ENCODE measurements at regions of chr11 and their contacts with region 1.

Region 1: GRCh38 chr11:9265211-9266131 is at the start of gene DENND5A:
- DNase-seq: peak; percentile 90
- H3K4me3 ChIP-seq: peak within 1 kb of the TSS; percentile 71 to 83 (median 81)
- H3K27ac ChIP-seq: peak within 1 kb of the TSS; percentile 81
- H3K4me1 ChIP-seq: peaks cover 13% of the 10 kb centered on the region
- H3K27me3 ChIP-seq: no peaks in the 10 kb centered on the region
- CTCF ChIP-seq: no peak
- POLR2A ChIP-seq: peak; percentile 88
- total RNA-seq, gene DENND5A: 116 and 117 TPM in 2 replicates

Region 2: GRCh38 chr11:8911029-8911826 is 354.2 kb before region 1 on chr11 and contains the start of gene AKIP1:
- CTCF ChIA-PET with region 1: no interaction called
- POLR2A ChIA-PET with region 1: no interaction called
- dilution Hi-C with region 1: no loop called
- intact Hi-C with region 1: loop called (anchors 10 kb)
- DNase-seq: peak; percentile 98
- H3K4me3 ChIP-seq: peak within 1 kb of the TSS; percentile 63 to 95 (median 82)
- H3K27ac ChIP-seq: peak within 1 kb of the TSS; percentile 63
- H3K4me1 ChIP-seq: peaks cover 32% of the 10 kb centered on the region
- H3K27me3 ChIP-seq: no peaks in the 10 kb centered on the region
- CTCF ChIP-seq: no peak
- POLR2A ChIP-seq: peak; percentile 42
- total RNA-seq, gene AKIP1: 21.9 and 23.4 TPM in 2 replicates

Region 3: DNA sequence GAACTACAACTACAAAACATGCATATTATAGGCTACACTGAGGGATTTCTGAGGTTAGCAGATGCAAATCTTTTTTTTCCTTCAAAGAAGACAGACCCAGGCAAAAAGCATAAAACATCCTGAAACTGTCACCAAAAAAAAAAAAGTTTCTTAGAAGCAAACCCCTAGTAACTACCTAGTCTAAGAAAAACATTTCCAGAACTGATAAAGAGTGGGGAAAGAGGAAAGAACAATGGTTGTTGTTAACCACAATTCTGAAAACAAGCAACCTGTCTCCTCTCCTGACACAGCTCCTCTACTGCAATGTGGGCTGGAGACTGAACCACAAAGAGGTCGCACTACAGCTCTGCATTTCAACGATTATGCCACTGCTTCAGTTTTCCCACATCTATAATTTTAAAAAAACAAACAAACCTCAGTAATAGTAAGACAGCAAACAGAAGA is 15.3 kb before region 1 on chr11:
- CTCF ChIA-PET with region 1: interaction called, 10 read pairs
- POLR2A ChIA-PET with region 1: interaction called, 5 read pairs
- dilution Hi-C with region 1: no loop called
- intact Hi-C with region 1: loop called (anchors 1 kb)
- DNase-seq: peak; percentile 68
- H3K4me3 ChIP-seq: no peak overlapping the region
- H3K27ac ChIP-seq: peak overlapping the region; percentile 1
- H3K4me1 ChIP-seq: peaks cover 35% of the 10 kb centered on the region
- H3K27me3 ChIP-seq: no peaks in the 10 kb centered on the region
- CTCF ChIP-seq: no peak
- POLR2A ChIP-seq: no peak

Region 4: DNA sequence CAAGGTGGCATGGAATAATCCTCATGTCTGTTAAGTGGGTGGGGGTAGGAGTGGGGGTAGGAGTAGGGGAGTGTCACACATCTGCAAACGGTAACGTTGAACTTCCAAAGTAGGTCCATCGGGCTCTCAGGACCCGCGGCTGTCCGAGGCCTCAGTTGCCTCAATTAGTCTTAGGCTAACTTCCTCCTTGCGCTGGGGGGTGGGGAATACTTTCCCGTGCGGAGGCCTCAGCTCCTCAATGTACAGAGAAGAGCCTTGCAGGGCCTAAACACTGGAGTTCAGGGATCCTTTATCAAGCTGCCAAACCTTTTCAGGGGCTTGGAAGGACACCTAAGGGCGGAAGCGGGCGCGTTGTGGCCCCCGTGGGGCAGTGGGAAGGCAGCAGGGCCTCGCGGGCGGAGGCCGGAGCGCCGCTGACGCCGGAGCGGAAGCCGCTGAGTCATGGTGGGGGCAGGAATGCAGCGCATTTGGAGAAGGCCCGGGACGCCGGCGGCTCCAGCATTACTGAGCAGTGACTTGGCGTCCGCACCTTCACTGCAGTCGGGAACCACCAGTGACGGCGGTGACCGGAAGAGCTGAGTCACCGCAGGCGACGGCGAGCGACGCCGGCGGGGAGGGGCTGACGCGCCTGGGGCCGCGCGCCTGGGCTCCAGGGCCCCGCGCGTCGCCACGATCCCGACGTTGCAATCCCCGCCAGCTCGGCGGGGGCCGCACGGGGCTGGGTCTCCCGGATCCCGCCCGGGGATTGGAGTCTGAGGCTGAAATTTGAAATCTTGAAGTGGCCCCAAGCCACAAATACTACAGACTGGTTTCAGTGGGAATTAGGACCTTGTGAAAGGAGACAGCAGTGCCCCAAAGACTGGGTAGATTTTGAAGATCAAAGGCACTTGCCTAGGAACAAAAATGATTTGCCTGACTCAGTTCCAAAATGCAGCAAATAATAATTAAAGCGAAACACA is 98.8 kb after region 1 on chr11:
- CTCF ChIA-PET with region 1: no interaction called
- POLR2A ChIA-PET with region 1: no interaction called
- dilution Hi-C with region 1: no loop called
- intact Hi-C with region 1: loop called (anchors 2 kb)
- DNase-seq: peak; percentile 96
- H3K4me3 ChIP-seq: peak overlapping the region in 2 of 3 experiments; percentile 23 to 46
- H3K27ac ChIP-seq: peak overlapping the region; percentile 92
- H3K4me1 ChIP-seq: peaks cover 17% of the 10 kb centered on the region
- H3K27me3 ChIP-seq: no peaks in the 10 kb centered on the region
- CTCF ChIP-seq: no peak
- POLR2A ChIP-seq: peak; percentile 67

Region 5: DNA sequence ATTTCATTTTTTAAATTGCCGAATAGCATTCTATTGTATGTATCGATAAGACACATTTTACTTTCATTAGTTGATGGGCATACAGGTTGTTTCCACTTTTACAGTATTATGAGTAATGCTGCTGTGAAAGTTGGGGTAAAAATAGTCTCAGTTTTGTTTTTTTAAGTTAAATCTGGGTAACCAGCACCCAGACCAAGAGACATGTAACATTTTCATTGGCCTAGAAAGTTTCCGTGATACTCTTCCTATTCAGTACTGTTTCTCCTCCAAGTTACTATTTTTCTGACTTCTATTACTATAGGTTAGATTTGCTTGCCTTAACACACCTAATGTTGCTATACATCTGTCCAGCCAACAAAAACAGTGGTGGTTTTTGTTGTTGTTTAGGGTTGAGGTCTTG is 131.3 kb after region 1 on chr11:
- CTCF ChIA-PET with region 1: no interaction called
- POLR2A ChIA-PET with region 1: interaction called, 11 read pairs
- dilution Hi-C with region 1: no loop called
- intact Hi-C with region 1: no loop called
- DNase-seq: no peak
- H3K4me3 ChIP-seq: no peak overlapping the region
- H3K27ac ChIP-seq: no peak overlapping the region
- H3K4me1 ChIP-seq: no peaks in the 10 kb centered on the region
- H3K27me3 ChIP-seq: no peaks in the 10 kb centered on the region
- CTCF ChIP-seq: no peak
- POLR2A ChIP-seq: no peak

Measured in endothelial cell of umbilical vein (primary cell).